T-cell (primary cell): ENCODE measurements at regions of chr11 and their contacts with region 1.

Region 1: GRCh38 chr11:129331871-129332274 is 43.8 kb upstream of the BARX2 start:
- DNase-seq: peak in 34 of 35 experiments; percentile 12 to 69 (median 42)
- ATAC-seq: peak; percentile 58 to 77 (median 64)
- H3K4me3 ChIP-seq: no peak overlapping the region
- H3K4me3 Mint-ChIP-seq: no peak overlapping the region
- H3K27ac ChIP-seq: no peak overlapping the region
- H3K27ac Mint-ChIP-seq: peak overlapping the region in 1 of 2 donors; percentile 59
- H3K4me1 ChIP-seq: no peaks in the 10 kb centered on the region
- H3K4me1 Mint-ChIP-seq: peaks cover 0 to 8% (median 6%) of the 10 kb centered on the region in 3 donors
- H3K27me3 ChIP-seq: no peaks in the 10 kb centered on the region
- H3K27me3 Mint-ChIP-seq: no peaks in the 10 kb centered on the region

Region 2: DNA sequence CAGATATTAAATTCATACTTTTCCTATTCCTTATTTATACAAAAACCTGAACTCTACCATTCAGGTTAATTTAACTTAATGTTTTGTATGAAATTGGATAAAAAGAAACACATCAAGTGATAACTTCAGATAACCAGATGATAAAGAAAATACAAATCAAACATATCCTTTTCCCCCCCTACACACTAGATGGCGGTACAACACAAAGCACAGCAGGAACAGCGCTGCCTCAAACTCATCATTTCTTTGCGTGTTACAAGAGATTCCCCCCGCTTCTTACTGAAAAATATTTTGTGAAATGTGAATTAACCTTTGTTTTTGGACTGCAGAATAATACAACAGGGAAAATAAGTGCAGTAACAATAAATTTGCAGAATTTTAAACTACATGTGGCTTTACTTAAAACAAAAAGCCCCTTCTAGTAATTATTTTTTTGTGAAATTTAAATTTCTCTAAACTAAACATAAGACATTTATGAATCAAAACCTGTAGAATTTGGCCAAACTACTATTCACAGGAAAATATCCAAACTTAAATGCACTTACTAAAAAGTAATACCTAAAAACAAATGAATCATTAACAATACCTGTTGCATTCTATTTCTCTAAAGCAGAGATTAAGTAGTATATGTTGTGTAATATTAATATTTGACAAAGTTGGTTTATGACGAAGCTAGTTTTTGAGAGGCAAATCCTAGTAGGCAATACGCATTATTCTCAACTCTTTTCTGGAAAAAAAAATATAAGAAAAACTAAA is 214.1 kb before region 1 on chr11:
- CTCF ChIA-PET with region 1: interaction called, 6 to 13 read pairs
- POLR2A ChIA-PET with region 1: no interaction called
- DNase-seq: peak in 30 of 35 experiments; percentile 5 to 74 (median 28)
- ATAC-seq: peak in 3 of 4 experiments; percentile 38 to 53 (median 44)
- H3K4me3 ChIP-seq: no peak overlapping the region
- H3K4me3 Mint-ChIP-seq: no peak overlapping the region
- H3K27ac ChIP-seq: no peak overlapping the region
- H3K27ac Mint-ChIP-seq: no peak overlapping the region
- H3K4me1 ChIP-seq: peaks cover 0 to 3% of the 10 kb centered on the region in 2 experiments
- H3K4me1 Mint-ChIP-seq: no peaks in the 10 kb centered on the region
- H3K27me3 ChIP-seq: no peaks in the 10 kb centered on the region
- H3K27me3 Mint-ChIP-seq: peaks cover 0 to 5% of the 10 kb centered on the region in 2 donors

Region 3: DNA sequence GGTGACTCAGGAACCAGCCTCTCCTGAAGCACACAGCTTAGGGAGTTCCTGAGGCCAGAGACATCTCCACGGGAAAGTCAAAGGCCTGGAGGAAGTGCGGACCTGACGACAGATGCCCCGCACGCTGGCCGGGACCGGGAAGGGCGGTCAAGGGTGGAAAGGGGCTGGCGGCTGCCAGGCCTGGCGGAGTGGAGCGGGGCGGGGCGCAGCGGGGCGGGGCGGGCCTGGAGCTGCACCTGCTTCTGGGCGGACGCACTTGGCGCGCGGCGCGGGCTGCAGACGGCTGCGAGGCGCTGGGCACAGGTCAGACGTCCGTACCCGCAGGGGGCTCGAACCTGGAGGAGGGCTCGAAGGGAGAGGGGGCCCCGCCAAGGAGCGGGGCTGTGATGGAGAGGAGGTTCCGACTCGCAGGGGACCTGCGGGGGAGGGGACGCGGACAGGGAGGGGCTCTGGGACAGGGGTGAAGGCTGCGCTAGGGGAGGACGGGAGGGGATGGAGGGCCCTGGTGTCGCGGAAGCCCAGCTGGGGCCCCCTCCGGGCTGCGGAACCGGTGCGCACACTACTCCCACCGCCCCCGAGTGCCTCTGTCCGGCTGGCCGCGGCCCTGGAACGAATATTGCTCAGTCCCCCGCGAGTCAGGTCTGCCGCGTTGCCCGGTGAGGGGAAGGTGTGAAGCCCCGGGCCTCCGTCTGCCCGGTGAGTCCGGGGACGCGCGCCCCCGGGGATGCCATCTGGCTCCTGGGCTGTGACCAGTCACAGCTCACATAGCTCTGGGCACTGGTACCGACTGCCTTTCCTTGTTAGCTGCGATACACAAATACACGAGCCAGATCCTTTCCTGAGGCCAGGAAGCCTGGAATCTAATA is 484.0 kb after region 1 on chr11 and contains the start of gene TMEM45B:
- CTCF ChIA-PET with region 1: no interaction called
- POLR2A ChIA-PET with region 1: interaction called in 1 of 2 experiments, 10 read pairs
- DNase-seq: peak in 18 of 35 experiments; percentile 8 to 51 (median 27)
- ATAC-seq: peak; percentile 27 to 60 (median 58)
- H3K4me3 ChIP-seq: peak within 1 kb of the TSS; percentile 7 to 56
- H3K4me3 Mint-ChIP-seq: peak within 1 kb of the TSS; percentile 80 to 92 (median 80)
- H3K27ac ChIP-seq: no peak within 1 kb of the TSS
- H3K27ac Mint-ChIP-seq: peak within 1 kb of the TSS; percentile 88 to 95
- H3K4me1 ChIP-seq: peaks cover 3 to 31% of the 10 kb centered on the region in 2 experiments
- H3K4me1 Mint-ChIP-seq: peaks cover 41 to 73% (median 65%) of the 10 kb centered on the region in 3 donors
- H3K27me3 ChIP-seq: peaks cover 0 to 28% of the 10 kb centered on the region in 2 experiments
- H3K27me3 Mint-ChIP-seq: peaks cover 12 to 17% of the 10 kb centered on the region in 2 donors
- total RNA-seq, gene TMEM45B: 1.4 to 22.7 (median 14.3) TPM